ENCODE measurements at regions of chr1 and their contacts with region 1.

Region 1: GRCh38 chr1:25204797-25205480 is 27.4 kb downstream of the SYF2 start:
- DNase-seq: no peak
- H3K4me3 ChIP-seq: no peak overlapping the region
- H3K27ac ChIP-seq: no peak overlapping the region
- H3K4me1 ChIP-seq: no peaks in the 10 kb centered on the region; a peak in 1 of 7 replicates
- H3K27me3 ChIP-seq: no peaks in the 10 kb centered on the region
- CTCF ChIP-seq: peak in 2 of 3 experiments; percentile 58 to 63; a peak in 3 of 4 replicates
- EP300 ChIP-seq: no peak
- POLR2A ChIP-seq: no peak
- RAD21 ChIP-seq: peak; percentile 75 to 79

Region 2: GRCh38 chr1:25054526-25055323 is 150.2 kb before region 1 on chr1:
- CTCF ChIA-PET with region 1: no interaction called
- POLR2A ChIA-PET with region 1: no interaction called
- DNase-seq: no peak
- H3K4me3 ChIP-seq: no peak overlapping the region
- H3K27ac ChIP-seq: no peak overlapping the region
- H3K4me1 ChIP-seq: peaks cover 0 to 12% (median 6%) of the 10 kb centered on the region in 4 experiments; a peak in 6 of 7 replicates
- H3K27me3 ChIP-seq: no peaks in the 10 kb centered on the region; a peak in 1 of 7 replicates
- CTCF ChIP-seq: no peak
- EP300 ChIP-seq: no peak
- POLR2A ChIP-seq: no peak
- RAD21 ChIP-seq: no peak

Region 3: DNA sequence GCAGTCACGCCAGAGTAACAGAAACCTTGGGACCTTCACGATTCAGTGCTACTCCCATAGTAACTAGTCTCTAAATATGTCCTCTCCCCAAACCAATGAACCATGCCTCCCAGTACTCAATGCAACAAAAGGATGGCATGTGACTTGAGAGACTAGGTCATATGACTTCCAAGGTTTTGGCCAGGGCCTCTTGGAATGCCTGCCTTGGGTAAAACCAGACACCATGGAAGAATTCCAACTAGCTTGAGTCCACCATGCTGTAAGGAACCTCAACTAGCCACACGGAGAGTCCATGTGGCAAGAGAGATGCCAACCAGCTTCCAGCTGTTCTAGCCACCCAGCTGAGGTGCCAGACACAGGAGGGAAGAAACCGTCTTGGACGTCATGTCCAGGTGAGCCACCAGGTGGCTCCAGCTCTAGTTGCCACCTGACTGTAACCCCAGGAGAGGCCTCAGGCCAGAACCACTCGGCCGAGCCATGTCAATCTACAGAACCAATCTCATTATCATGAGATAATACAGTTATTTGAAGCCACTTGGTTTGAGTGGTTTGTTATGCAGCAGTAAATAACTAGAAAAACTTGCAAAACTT is 87.6 kb before region 1 on chr1:
- CTCF ChIA-PET with region 1: interaction called, 50 read pairs
- POLR2A ChIA-PET with region 1: no interaction called
- DNase-seq: peak; percentile 38 to 77
- H3K4me3 ChIP-seq: no peak overlapping the region
- H3K27ac ChIP-seq: no peak overlapping the region
- H3K4me1 ChIP-seq: no peaks in the 10 kb centered on the region
- H3K27me3 ChIP-seq: no peaks in the 10 kb centered on the region
- CTCF ChIP-seq: peak; percentile 84 to 86 (median 86)
- EP300 ChIP-seq: no peak
- POLR2A ChIP-seq: no peak
- RAD21 ChIP-seq: peak; percentile 67 to 77

Region 4: GRCh38 chr1:25140073-25140797 is 64.7 kb before region 1 on chr1:
- CTCF ChIA-PET with region 1: interaction called, 13 read pairs
- POLR2A ChIA-PET with region 1: no interaction called
- DNase-seq: peak in 1 of 2 experiments; percentile 44
- H3K4me3 ChIP-seq: no peak overlapping the region
- H3K27ac ChIP-seq: no peak overlapping the region
- H3K4me1 ChIP-seq: peaks cover 0 to 5% (median 1%) of the 10 kb centered on the region in 4 experiments; a peak in 2 of 7 replicates
- H3K27me3 ChIP-seq: no peaks in the 10 kb centered on the region
- CTCF ChIP-seq: no peak
- EP300 ChIP-seq: no peak
- POLR2A ChIP-seq: no peak
- RAD21 ChIP-seq: no peak

Region 5: DNA sequence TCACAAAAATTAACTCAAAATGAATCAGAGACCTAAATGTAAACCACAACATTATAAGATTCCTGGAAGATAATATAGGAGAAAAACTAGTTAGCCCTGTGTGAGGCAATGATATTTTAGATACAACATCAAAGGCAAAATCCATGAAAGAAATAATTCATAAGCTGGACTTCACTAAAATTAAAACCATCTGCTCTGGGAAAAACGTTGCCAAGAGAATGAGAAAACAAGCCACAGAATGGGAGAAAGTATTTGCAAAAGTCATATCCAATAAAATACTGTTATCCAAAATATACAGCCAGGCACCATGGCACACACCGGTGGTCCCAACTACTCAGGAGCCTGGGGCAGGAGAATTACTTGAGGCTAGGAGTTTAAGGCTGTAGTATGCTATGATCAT is 43.0 kb before region 1 on chr1:
- CTCF ChIA-PET with region 1: no interaction called
- POLR2A ChIA-PET with region 1: no interaction called
- DNase-seq: peak in 1 of 2 experiments; percentile 1
- H3K4me3 ChIP-seq: no peak overlapping the region
- H3K27ac ChIP-seq: no peak overlapping the region
- H3K4me1 ChIP-seq: no peaks in the 10 kb centered on the region
- H3K27me3 ChIP-seq: no peaks in the 10 kb centered on the region
- CTCF ChIP-seq: no peak
- EP300 ChIP-seq: no peak
- POLR2A ChIP-seq: no peak
- RAD21 ChIP-seq: no peak

Region 6: DNA sequence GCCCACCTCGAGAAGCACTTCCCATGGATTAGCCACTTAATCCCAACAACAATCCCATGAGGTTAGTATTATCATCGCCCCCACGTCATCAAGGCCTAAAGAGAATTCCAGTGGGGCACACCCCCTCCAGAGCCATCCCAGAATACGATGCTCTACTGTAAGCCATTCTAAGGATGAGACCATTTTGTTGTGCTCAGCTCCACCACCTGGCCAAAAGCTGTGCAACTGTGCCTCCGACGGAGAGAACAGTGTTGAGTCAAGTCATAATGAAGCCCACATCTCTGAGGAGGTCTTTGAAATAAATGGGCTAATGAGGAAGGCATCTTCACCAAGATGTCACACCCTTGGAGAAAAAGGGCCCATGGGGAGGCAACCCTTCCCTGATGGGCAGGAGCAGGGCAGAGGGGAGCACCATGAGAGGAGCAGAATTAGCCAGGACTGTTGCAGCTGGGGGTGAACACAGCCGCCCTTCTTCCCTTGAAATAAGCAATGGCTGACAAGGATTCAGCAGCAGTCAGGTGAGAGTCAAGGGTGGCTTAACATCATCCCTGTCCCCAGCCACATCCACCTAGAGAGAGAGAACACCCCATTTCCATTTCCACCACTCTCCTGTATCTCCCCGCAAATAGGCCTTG is 12.8 kb after region 1 on chr1:
- CTCF ChIA-PET with region 1: interaction called, 12 read pairs
- POLR2A ChIA-PET with region 1: no interaction called
- DNase-seq: no peak
- H3K4me3 ChIP-seq: no peak overlapping the region
- H3K27ac ChIP-seq: no peak overlapping the region
- H3K4me1 ChIP-seq: no peaks in the 10 kb centered on the region
- H3K27me3 ChIP-seq: no peaks in the 10 kb centered on the region
- CTCF ChIP-seq: peak in 2 of 3 experiments; percentile 22 to 28; a peak in 2 of 4 replicates
- EP300 ChIP-seq: no peak
- POLR2A ChIP-seq: no peak
- RAD21 ChIP-seq: peak; percentile 32 to 42; a peak in 3 of 4 replicates

Region 7: GRCh38 chr1:25355841-25356395 is 151.0 kb after region 1 on chr1:
- CTCF ChIA-PET with region 1: no interaction called
- POLR2A ChIA-PET with region 1: no interaction called
- DNase-seq: no peak
- H3K4me3 ChIP-seq: no peak overlapping the region
- H3K27ac ChIP-seq: no peak overlapping the region
- H3K4me1 ChIP-seq: no peaks in the 10 kb centered on the region
- H3K27me3 ChIP-seq: no peaks in the 10 kb centered on the region
- CTCF ChIP-seq: no peak
- EP300 ChIP-seq: no peak
- POLR2A ChIP-seq: no peak
- RAD21 ChIP-seq: no peak

Region 8: DNA sequence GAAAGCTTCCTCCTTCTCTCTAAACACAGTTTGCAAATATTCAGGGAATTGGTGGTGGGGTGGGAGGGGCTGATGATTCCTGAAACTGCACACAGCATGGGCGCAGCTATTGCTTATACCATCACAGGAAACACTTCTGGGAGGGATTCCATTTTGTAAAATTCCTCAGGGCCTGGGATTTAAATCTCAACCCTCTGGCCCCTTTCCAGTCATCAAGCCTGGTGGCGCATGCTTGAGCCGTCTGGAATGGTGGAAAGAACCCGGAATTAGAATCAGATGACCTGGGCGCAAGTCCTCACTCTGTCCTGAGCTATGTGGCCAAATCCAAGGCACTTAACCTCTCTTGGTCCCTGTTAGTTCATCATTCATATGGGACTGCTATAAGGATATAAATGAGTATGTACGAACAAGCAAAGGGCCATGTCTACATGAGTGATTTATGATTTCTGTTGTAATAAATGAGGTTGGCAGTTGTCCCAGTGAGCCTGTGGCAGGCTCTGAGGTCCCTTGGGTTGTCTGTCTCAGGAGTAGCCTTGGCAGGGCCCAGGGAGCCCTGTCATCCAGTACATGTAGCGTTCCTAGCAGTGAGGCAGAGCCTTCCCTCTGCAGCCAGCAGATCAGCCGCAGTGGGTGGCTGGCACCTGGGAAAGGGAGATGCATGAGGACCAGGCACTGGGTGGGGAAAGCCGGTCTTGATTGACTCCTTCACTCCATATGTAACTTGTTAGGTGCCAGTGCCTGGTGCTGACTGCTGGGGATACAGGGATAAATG is 483.6 kb after region 1 on chr1:
- CTCF ChIA-PET with region 1: no interaction called
- POLR2A ChIA-PET with region 1: no interaction called
- DNase-seq: no peak
- H3K4me3 ChIP-seq: no peak overlapping the region
- H3K27ac ChIP-seq: no peak overlapping the region
- H3K4me1 ChIP-seq: no peaks in the 10 kb centered on the region
- H3K27me3 ChIP-seq: no peaks in the 10 kb centered on the region; a peak in 1 of 7 replicates
- CTCF ChIP-seq: no peak
- EP300 ChIP-seq: no peak
- POLR2A ChIP-seq: no peak
- RAD21 ChIP-seq: no peak

Measured in H1 (cell line).